MCF 10A (cell line): ENCODE measurements at regions of chr6 and their contacts with region 1.

Region 1: GRCh38 chr6:63598049-63599036 is 26.1 kb downstream of the LOC128125822 start:
- DNase-seq: peak; percentile 84
- H3K4me3 Mint-ChIP-seq: peak overlapping the region; percentile 72
- H3K27ac Mint-ChIP-seq: peak overlapping the region; percentile 4
- H3K4me1 Mint-ChIP-seq: peaks cover 7% of the 10 kb centered on the region
- H3K27me3 Mint-ChIP-seq: no peaks in the 10 kb centered on the region
- CTCF ChIP-seq: peak; percentile 79

Region 2: DNA sequence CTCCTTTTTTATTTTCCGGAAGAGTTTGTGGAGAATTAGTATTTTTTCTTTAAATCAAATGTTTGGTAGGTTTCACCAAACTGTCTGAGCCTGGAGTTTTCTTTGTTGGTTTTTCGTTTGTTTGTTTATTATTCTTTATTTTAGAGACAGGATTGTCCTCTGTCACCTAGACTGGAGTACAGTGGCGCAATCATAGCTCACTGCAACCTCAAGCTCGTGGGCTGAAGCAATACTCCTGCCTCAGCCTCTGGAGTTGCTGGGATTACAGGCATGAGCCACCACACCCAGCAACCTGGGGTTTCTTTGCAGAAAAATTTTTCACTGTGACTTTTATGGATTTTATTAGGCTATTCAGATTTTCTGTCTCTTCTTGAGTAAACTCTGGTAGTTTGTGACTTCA is 146.2 kb before region 1 on chr6:
- CTCF ChIA-PET with region 1: no interaction called
- POLR2A ChIA-PET with region 1: no interaction called
- intact Hi-C with region 1: no loop called
- DNase-seq: peak; percentile 69
- H3K4me3 Mint-ChIP-seq: no peak overlapping the region
- H3K27ac Mint-ChIP-seq: no peak overlapping the region
- H3K4me1 Mint-ChIP-seq: peaks cover 6% of the 10 kb centered on the region
- H3K27me3 Mint-ChIP-seq: no peaks in the 10 kb centered on the region
- CTCF ChIP-seq: no peak

Region 3: DNA sequence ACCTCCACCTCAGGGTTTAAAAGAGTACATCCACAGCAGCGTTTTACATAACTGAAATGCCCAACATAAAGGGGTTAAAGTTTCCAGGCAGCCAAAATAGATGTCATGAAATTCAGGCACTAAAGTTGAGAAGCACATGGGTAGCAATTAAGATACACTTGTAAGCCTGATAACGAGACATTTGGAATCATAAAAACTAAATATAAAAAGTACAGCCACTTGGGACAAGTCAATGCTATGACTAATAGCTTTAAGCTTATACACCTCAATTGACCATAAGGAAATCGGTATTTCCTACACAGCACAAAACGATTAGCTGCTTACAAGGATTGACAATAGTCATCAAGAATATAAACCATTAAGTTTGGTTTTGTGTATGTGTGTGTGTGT is 14.2 kb before region 1 on chr6:
- CTCF ChIA-PET with region 1: interaction called, 9 read pairs
- POLR2A ChIA-PET with region 1: interaction called, 11 read pairs
- intact Hi-C with region 1: no loop called
- DNase-seq: peak; percentile 44
- H3K4me3 Mint-ChIP-seq: no peak overlapping the region
- H3K27ac Mint-ChIP-seq: no peak overlapping the region
- H3K4me1 Mint-ChIP-seq: peaks cover 4% of the 10 kb centered on the region
- H3K27me3 Mint-ChIP-seq: no peaks in the 10 kb centered on the region
- CTCF ChIP-seq: no peak

Region 4: GRCh38 chr6:63609231-63609630 is 10.9 kb after region 1 on chr6:
- CTCF ChIA-PET with region 1: interaction called, 43 read pairs
- POLR2A ChIA-PET with region 1: no interaction called
- intact Hi-C with region 1: no loop called
- DNase-seq: no peak
- H3K4me3 Mint-ChIP-seq: no peak overlapping the region
- H3K27ac Mint-ChIP-seq: no peak overlapping the region
- H3K4me1 Mint-ChIP-seq: no peaks in the 10 kb centered on the region
- H3K27me3 Mint-ChIP-seq: no peaks in the 10 kb centered on the region
- CTCF ChIP-seq: no peak

Region 5: GRCh38 chr6:63663147-63663877 is 65.0 kb after region 1 on chr6:
- CTCF ChIA-PET with region 1: interaction called, 18 read pairs
- POLR2A ChIA-PET with region 1: interaction called, 3 read pairs
- intact Hi-C with region 1: no loop called
- DNase-seq: peak; percentile 73
- H3K4me3 Mint-ChIP-seq: peak overlapping the region; percentile 21
- H3K27ac Mint-ChIP-seq: peak overlapping the region; percentile 63
- H3K4me1 Mint-ChIP-seq: peaks cover 22% of the 10 kb centered on the region
- H3K27me3 Mint-ChIP-seq: no peaks in the 10 kb centered on the region
- CTCF ChIP-seq: no peak

Region 6: GRCh38 chr6:63764318-63764916 is 166.1 kb after region 1 on chr6:
- CTCF ChIA-PET with region 1: interaction called, 23 read pairs
- POLR2A ChIA-PET with region 1: interaction called, 10 read pairs
- intact Hi-C with region 1: loop called (anchors 1 kb)
- DNase-seq: peak; percentile 62
- H3K4me3 Mint-ChIP-seq: no peak overlapping the region
- H3K27ac Mint-ChIP-seq: no peak overlapping the region
- H3K4me1 Mint-ChIP-seq: no peaks in the 10 kb centered on the region
- H3K27me3 Mint-ChIP-seq: no peaks in the 10 kb centered on the region
- CTCF ChIP-seq: peak; percentile 51